Activated B cell treated with CpG ODN at 0.5 μM for 24 hours (primary cell): ENCODE measurements at regions of chr16 and their contacts with region 1.

Region 1: GRCh38 chr16:27461483-27462171 is 59.7 kb downstream of the IL21R start:
- DNase-seq: no peak
- ATAC-seq: no peak
- H3K4me3 Mint-ChIP-seq: no peak overlapping the region
- H3K27ac Mint-ChIP-seq: no peak overlapping the region
- H3K4me1 Mint-ChIP-seq: peaks cover 8% of the 10 kb centered on the region
- H3K27me3 Mint-ChIP-seq: no peaks in the 10 kb centered on the region
- CTCF ChIP-seq: no peak

Region 2: GRCh38 chr16:27154705-27155521 is 306.7 kb before region 1 on chr16:
- CTCF ChIA-PET with region 1: interaction called, 3 read pairs
- POLR2A ChIA-PET with region 1: no interaction called
- intact Hi-C with region 1: loop called (anchors 1 kb)
- DNase-seq: peak; percentile 64
- ATAC-seq: peak; percentile 93
- H3K4me3 Mint-ChIP-seq: no peak overlapping the region
- H3K27ac Mint-ChIP-seq: peak overlapping the region; percentile 59
- H3K4me1 Mint-ChIP-seq: peaks cover 11% of the 10 kb centered on the region
- H3K27me3 Mint-ChIP-seq: no peaks in the 10 kb centered on the region
- CTCF ChIP-seq: peak; percentile 94

Region 3: DNA sequence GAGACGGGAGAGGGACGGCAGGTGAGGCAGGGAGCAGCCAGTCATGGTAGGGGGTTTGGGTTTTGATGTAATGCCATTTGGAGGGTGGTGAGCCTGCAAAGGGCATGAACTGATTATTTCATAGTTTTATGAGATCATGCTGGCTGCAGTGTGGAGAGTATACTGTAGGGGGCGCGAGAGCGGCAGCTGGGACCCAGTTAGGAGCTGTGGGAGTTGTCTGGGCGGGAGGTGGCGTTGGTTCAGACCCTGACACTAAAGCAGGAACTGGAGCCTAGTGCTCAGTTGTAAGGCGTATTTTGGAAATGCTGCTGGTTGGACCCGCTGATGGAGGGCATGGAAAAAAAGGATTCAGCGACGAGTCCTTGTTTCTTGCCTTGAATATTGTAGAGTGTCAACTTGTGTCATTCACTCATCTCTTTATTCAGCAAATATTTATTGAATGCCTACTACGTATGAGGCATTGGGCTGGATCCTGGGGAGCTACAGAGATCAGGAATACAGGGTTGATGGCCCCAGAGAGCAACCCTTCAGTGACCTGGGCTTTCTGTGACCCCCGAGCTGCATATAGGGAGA is 282.0 kb before region 1 on chr16:
- CTCF ChIA-PET with region 1: interaction called, 4 read pairs
- POLR2A ChIA-PET with region 1: no interaction called
- intact Hi-C with region 1: loop called (anchors 1 kb)
- DNase-seq: peak; percentile 73
- ATAC-seq: peak; percentile 99
- H3K4me3 Mint-ChIP-seq: no peak overlapping the region
- H3K27ac Mint-ChIP-seq: peak overlapping the region; percentile 5
- H3K4me1 Mint-ChIP-seq: peaks cover 28% of the 10 kb centered on the region
- H3K27me3 Mint-ChIP-seq: no peaks in the 10 kb centered on the region
- CTCF ChIP-seq: peak; percentile 49

Region 4: GRCh38 chr16:27430923-27431484 is 30.6 kb before region 1 on chr16:
- CTCF ChIA-PET with region 1: no interaction called
- POLR2A ChIA-PET with region 1: no interaction called
- intact Hi-C with region 1: no loop called
- DNase-seq: peak; percentile 53
- ATAC-seq: peak; percentile 49
- H3K4me3 Mint-ChIP-seq: peak overlapping the region; percentile 66
- H3K27ac Mint-ChIP-seq: peak overlapping the region; percentile 85
- H3K4me1 Mint-ChIP-seq: peaks cover 73% of the 10 kb centered on the region
- H3K27me3 Mint-ChIP-seq: no peaks in the 10 kb centered on the region
- CTCF ChIP-seq: no peak

Region 5: GRCh38 chr16:27737513-27737912 is 275.9 kb after region 1 on chr16:
- CTCF ChIA-PET with region 1: no interaction called
- POLR2A ChIA-PET with region 1: no interaction called
- intact Hi-C with region 1: no loop called
- DNase-seq: no peak
- ATAC-seq: no peak
- H3K4me3 Mint-ChIP-seq: no peak overlapping the region
- H3K27ac Mint-ChIP-seq: no peak overlapping the region
- H3K4me1 Mint-ChIP-seq: no peaks in the 10 kb centered on the region
- H3K27me3 Mint-ChIP-seq: no peaks in the 10 kb centered on the region
- CTCF ChIP-seq: no peak